ENCODE measurements at regions of chr1 and their contacts with region 1.

Region 1: GRCh38 chr1:24391882-24392603 is 21.5 kb downstream of the STPG1 start:
- DNase-seq: peak; percentile 33 to 79 (median 49)
- H3K4me3 ChIP-seq: peak overlapping the region; percentile 44
- H3K4me3 Mint-ChIP-seq: peak overlapping the region; percentile 73 to 91 (median 80)
- H3K27ac ChIP-seq: peak overlapping the region; percentile 33
- H3K27ac Mint-ChIP-seq: peak overlapping the region; percentile 86 to 99 (median 97)
- H3K4me1 ChIP-seq: peaks cover 33% of the 10 kb centered on the region
- H3K4me1 Mint-ChIP-seq: peaks cover 23 to 27% (median 25%) of the 10 kb centered on the region in 3 donors
- H3K27me3 ChIP-seq: no peaks in the 10 kb centered on the region
- H3K27me3 Mint-ChIP-seq: peaks cover 0 to 2% of the 10 kb centered on the region in 2 donors

Region 2: GRCh38 chr1:24150234-24151174 is 241.5 kb before region 1 on chr1:
- CTCF ChIA-PET with region 1: interaction called, 79 read pairs
- POLR2A ChIA-PET with region 1: interaction called, 4 read pairs
- DNase-seq: peak; percentile 69 to 89 (median 80)
- H3K4me3 ChIP-seq: no peak overlapping the region
- H3K4me3 Mint-ChIP-seq: peak overlapping the region in 6 of 7 donors; percentile 59 to 73 (median 62)
- H3K27ac ChIP-seq: no peak overlapping the region
- H3K27ac Mint-ChIP-seq: peak overlapping the region in 3 of 8 donors; percentile 6 to 65 (median 52)
- H3K4me1 ChIP-seq: peaks cover 11% of the 10 kb centered on the region
- H3K4me1 Mint-ChIP-seq: peaks cover 9 to 16% (median 11%) of the 10 kb centered on the region in 3 donors
- H3K27me3 ChIP-seq: peaks cover 7% of the 10 kb centered on the region
- H3K27me3 Mint-ChIP-seq: peaks cover 13 to 39% of the 10 kb centered on the region in 2 donors

Region 3: DNA sequence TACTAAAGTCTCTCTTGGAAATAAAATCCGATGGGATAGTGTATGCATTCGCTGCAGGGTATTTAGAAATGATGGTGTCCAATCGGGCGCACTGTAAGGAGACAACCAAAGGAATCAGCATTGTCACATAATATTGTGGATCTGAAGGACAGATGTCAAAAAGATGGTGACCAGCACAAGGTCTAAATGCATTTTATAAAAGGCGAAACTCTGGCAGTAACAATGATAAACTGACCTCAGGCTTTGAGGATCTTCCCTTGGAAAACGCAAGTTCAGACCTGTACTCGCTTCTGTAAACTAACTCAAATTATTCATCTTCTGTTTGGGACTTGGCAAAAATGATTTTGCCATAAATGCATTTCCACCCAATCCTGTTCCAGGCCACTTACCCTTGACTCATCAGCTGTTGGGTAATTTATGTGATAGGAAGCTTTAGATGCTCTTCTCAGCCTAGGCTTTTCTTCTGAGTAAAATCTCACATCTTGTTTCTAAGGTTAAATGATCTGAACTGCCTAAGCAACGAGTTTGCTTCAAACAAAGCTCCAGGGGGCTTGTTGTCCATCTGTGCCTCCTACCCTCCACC is 12.2 kb before region 1 on chr1:
- CTCF ChIA-PET with region 1: interaction called, 29 read pairs
- POLR2A ChIA-PET with region 1: no interaction called
- DNase-seq: no peak
- H3K4me3 ChIP-seq: no peak overlapping the region
- H3K4me3 Mint-ChIP-seq: no peak overlapping the region
- H3K27ac ChIP-seq: no peak overlapping the region
- H3K27ac Mint-ChIP-seq: peak overlapping the region in 1 of 8 donors; percentile 5
- H3K4me1 ChIP-seq: peaks cover 4% of the 10 kb centered on the region
- H3K4me1 Mint-ChIP-seq: peaks cover 6 to 7% (median 7%) of the 10 kb centered on the region in 3 donors
- H3K27me3 ChIP-seq: no peaks in the 10 kb centered on the region
- H3K27me3 Mint-ChIP-seq: no peaks in the 10 kb centered on the region

Region 4: DNA sequence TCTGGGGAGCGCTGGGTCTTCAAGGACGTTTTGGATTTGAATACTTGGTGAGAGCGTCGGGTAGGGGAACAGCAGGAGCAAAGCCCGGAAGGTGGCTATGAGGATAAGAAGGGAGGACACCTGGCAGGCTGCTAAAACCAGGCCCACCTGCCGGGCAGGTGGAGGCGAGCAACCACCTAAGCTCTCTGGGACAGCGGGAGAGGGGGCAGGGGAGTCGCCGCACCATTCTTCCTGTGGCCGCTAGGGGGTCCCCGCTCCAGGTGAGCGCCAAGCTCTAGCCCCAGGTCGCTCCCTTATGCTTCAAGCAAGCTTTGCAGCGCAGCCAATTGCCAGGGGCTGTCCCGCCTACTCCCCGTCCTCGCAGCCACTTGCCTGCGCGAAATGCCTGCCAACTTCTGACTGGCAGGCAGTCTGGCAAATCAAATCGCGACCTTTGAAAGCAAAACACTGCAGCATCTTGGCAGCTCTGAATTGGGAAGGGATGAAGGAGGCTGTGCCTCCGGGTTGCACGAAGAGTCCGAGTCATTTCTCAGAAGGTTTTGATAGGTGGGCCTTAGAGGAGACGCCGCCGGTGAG is 23.4 kb after region 1 on chr1 and contains the start of gene NIPAL3:
- CTCF ChIA-PET with region 1: interaction called, 27 read pairs
- POLR2A ChIA-PET with region 1: interaction called, 3 read pairs
- DNase-seq: peak; percentile 95 to 99 (median 96)
- H3K4me3 ChIP-seq: peak within 1 kb of the TSS; percentile 73
- H3K4me3 Mint-ChIP-seq: peak within 1 kb of the TSS; percentile 91 to 100 (median 97)
- H3K27ac ChIP-seq: peak within 1 kb of the TSS; percentile 27
- H3K27ac Mint-ChIP-seq: peak within 1 kb of the TSS; percentile 46 to 97 (median 92)
- H3K4me1 ChIP-seq: peaks cover 52% of the 10 kb centered on the region
- H3K4me1 Mint-ChIP-seq: peaks cover 51 to 77% (median 75%) of the 10 kb centered on the region in 3 donors
- H3K27me3 ChIP-seq: no peaks in the 10 kb centered on the region
- H3K27me3 Mint-ChIP-seq: no peaks in the 10 kb centered on the region
- total RNA-seq, gene NIPAL3: 31.3 to 33.2 TPM

Region 5: GRCh38 chr1:24526940-24527542 is 135.0 kb after region 1 on chr1:
- CTCF ChIA-PET with region 1: no interaction called
- POLR2A ChIA-PET with region 1: no interaction called
- DNase-seq: peak; percentile 8 to 54 (median 34)
- H3K4me3 ChIP-seq: no peak overlapping the region
- H3K4me3 Mint-ChIP-seq: no peak overlapping the region
- H3K27ac ChIP-seq: no peak overlapping the region
- H3K27ac Mint-ChIP-seq: peak overlapping the region in 6 of 8 donors; percentile 61 to 93 (median 74)
- H3K4me1 ChIP-seq: peaks cover 40% of the 10 kb centered on the region
- H3K4me1 Mint-ChIP-seq: peaks cover 32 to 72% (median 62%) of the 10 kb centered on the region in 3 donors
- H3K27me3 ChIP-seq: no peaks in the 10 kb centered on the region
- H3K27me3 Mint-ChIP-seq: no peaks in the 10 kb centered on the region

Region 6: DNA sequence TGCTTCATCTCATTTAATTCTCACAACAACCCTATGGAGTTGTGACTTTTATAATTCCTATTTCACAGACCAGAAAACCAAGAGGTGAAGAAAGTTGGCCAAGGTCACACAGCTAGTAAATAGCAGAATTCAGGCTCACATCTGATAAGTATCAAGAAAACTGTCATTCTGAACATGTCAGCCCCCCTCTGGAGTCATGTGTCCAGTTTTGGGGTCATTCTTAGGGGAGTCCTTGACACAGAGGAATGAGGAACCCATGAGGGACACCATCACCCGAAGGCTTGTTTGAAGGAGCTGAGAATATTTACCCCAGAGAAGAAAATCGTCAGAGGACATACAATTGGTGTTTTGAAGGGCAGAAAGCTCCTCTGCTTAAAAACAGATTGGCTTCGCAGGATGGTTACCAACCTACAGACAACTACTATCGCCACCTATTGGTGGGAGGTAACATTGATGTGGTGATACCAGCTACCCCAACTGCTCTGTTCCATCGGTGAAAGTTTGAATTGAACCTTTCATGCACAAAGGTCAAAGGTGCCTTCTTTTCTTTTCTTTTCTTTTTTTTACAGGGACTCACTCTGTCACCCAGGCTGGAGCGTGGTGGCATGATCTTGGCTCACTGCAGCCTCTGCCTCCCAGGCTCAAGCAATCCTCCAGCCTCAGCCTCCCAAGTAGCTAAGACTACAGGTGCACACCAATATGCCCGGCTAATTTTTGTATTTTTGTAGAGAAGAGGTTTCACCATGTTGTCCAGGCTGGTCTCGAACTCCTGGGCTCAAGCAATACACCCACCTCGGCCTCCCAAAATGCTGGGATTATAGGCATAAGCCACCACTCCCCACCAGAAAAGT is 195.2 kb after region 1 on chr1:
- CTCF ChIA-PET with region 1: interaction called, 38 read pairs
- POLR2A ChIA-PET with region 1: interaction called, 3 read pairs
- DNase-seq: peak; percentile 11 to 77 (median 63)
- H3K4me3 ChIP-seq: no peak overlapping the region
- H3K4me3 Mint-ChIP-seq: peak overlapping the region in 2 of 7 donors; percentile 28 to 34
- H3K27ac ChIP-seq: no peak overlapping the region
- H3K27ac Mint-ChIP-seq: peak overlapping the region; percentile 2 to 88 (median 66)
- H3K4me1 ChIP-seq: peaks cover 4% of the 10 kb centered on the region
- H3K4me1 Mint-ChIP-seq: peaks cover 5 to 8% (median 6%) of the 10 kb centered on the region in 3 donors
- H3K27me3 ChIP-seq: peaks cover 9% of the 10 kb centered on the region
- H3K27me3 Mint-ChIP-seq: peaks cover 5 to 8% of the 10 kb centered on the region in 2 donors